GM12878 (cell line): ENCODE measurements at regions of chr6 and their contacts with region 1.

Region 1: GRCh38 chr6:56693246-56693607 is 50.5 kb upstream of the DST start:
- DNase-seq: no peak
- ATAC-seq: no peak
- H3K4me3 ChIP-seq: no peak overlapping the region
- H3K27ac ChIP-seq: no peak overlapping the region
- H3K4me1 ChIP-seq: peaks cover 12% of the 10 kb centered on the region
- H3K27me3 ChIP-seq: no peaks in the 10 kb centered on the region
- CTCF ChIP-seq: no peak
- EP300 ChIP-seq: no peak
- POLR2A ChIP-seq: no peak
- RAD21 ChIP-seq: no peak

Region 2: DNA sequence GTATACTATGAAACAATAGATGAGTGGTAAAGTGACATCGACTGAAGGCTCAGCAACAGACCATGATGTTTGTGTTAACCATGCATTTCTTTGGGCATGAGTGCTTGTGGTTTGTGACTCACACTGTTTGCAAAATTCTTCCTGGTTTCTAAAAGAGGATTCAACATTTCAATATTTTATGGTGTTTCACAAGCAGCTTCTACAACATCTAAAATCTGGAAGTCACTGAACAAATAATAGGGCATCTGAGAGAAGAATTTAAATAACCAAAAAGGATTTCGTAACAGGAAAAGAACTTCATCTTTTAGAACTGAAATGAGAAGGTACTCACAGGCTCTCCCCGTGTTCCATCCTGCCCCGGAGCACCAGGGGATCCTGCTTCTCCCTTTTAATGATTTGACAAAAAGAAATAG is 592.1 kb before region 1 on chr6:
- CTCF ChIA-PET with region 1: no interaction called
- POLR2A ChIA-PET with region 1: no interaction called
- RAD21 ChIA-PET with region 1: no interaction called
- SMC1A ChIA-PET with region 1: no interaction called
- in situ Hi-C with region 1: no loop called
- intact Hi-C with region 1: no loop called
- DNase-seq: no peak
- ATAC-seq: 0 out of 3 replicates have a peak, but pooled peaks have one; percentile 23
- H3K4me3 ChIP-seq: no peak overlapping the region
- H3K27ac ChIP-seq: no peak overlapping the region
- H3K4me1 ChIP-seq: no peaks in the 10 kb centered on the region
- H3K27me3 ChIP-seq: no peaks in the 10 kb centered on the region
- CTCF ChIP-seq: no peak
- EP300 ChIP-seq: no peak
- POLR2A ChIP-seq: no peak
- RAD21 ChIP-seq: no peak

Region 3: GRCh38 chr6:56671651-56672461 is 21.4 kb before region 1 on chr6:
- CTCF ChIA-PET with region 1: interaction called, 30 read pairs
- POLR2A ChIA-PET with region 1: interaction called, 7 read pairs
- RAD21 ChIA-PET with region 1: no interaction called
- SMC1A ChIA-PET with region 1: interaction called, 13 read pairs
- in situ Hi-C with region 1: no loop called
- intact Hi-C with region 1: no loop called
- DNase-seq: no peak
- ATAC-seq: peak; percentile 47
- H3K4me3 ChIP-seq: no peak overlapping the region
- H3K27ac ChIP-seq: peak overlapping the region; percentile 6
- H3K4me1 ChIP-seq: no peaks in the 10 kb centered on the region; the same call in 1 of the 2 replicates
- H3K27me3 ChIP-seq: no peaks in the 10 kb centered on the region
- CTCF ChIP-seq: no peak
- EP300 ChIP-seq: no peak
- POLR2A ChIP-seq: no peak
- RAD21 ChIP-seq: no peak

Region 4: DNA sequence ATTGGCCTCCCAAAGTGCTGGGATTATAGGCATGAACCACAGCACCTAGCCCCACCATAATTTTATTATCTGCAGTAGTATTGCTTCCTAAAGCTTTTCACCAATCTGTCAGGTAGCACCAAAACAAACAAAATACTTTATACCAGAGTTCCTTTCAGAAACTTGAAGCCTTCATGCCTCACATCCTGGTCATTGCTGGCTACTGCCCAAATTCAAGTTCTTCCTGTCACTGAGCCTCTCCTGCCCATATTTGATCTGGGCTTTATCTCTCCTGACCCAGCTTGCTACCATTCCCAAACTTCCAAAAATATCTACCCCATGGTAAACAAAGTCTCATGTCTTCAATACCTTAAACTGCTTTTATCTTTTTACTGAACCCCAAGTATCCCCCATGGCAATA is 15.7 kb before region 1 on chr6:
- CTCF ChIA-PET with region 1: interaction called, 30 read pairs
- POLR2A ChIA-PET with region 1: interaction called, 7 read pairs
- RAD21 ChIA-PET with region 1: no interaction called
- SMC1A ChIA-PET with region 1: interaction called, 29 read pairs
- in situ Hi-C with region 1: no loop called
- intact Hi-C with region 1: no loop called
- DNase-seq: no peak
- ATAC-seq: no peak
- H3K4me3 ChIP-seq: no peak overlapping the region
- H3K27ac ChIP-seq: peak overlapping the region; percentile 2; the same call in 1 of the 2 replicates
- H3K4me1 ChIP-seq: peaks cover 9% of the 10 kb centered on the region
- H3K27me3 ChIP-seq: no peaks in the 10 kb centered on the region
- CTCF ChIP-seq: no peak
- EP300 ChIP-seq: no peak
- POLR2A ChIP-seq: no peak
- RAD21 ChIP-seq: no peak

Region 5: GRCh38 chr6:56682635-56683034 is 10.6 kb before region 1 on chr6:
- CTCF ChIA-PET with region 1: interaction called, 32 read pairs
- POLR2A ChIA-PET with region 1: interaction called, 7 read pairs
- RAD21 ChIA-PET with region 1: no interaction called
- SMC1A ChIA-PET with region 1: interaction called, 29 read pairs
- in situ Hi-C with region 1: no loop called
- intact Hi-C with region 1: no loop called
- DNase-seq: no peak
- ATAC-seq: no peak
- H3K4me3 ChIP-seq: no peak overlapping the region
- H3K27ac ChIP-seq: no peak overlapping the region
- H3K4me1 ChIP-seq: peaks cover 4% of the 10 kb centered on the region; the same call in 1 of the 2 replicates
- H3K27me3 ChIP-seq: no peaks in the 10 kb centered on the region
- CTCF ChIP-seq: no peak
- EP300 ChIP-seq: no peak
- POLR2A ChIP-seq: no peak
- RAD21 ChIP-seq: no peak

Region 6: GRCh38 chr6:57006131-57006737 is 313.0 kb after region 1 on chr6:
- CTCF ChIA-PET with region 1: no interaction called
- POLR2A ChIA-PET with region 1: no interaction called
- RAD21 ChIA-PET with region 1: no interaction called
- SMC1A ChIA-PET with region 1: no interaction called
- in situ Hi-C with region 1: no loop called
- intact Hi-C with region 1: no loop called
- DNase-seq: no peak
- ATAC-seq: no peak
- H3K4me3 ChIP-seq: no peak overlapping the region
- H3K27ac ChIP-seq: no peak overlapping the region
- H3K4me1 ChIP-seq: no peaks in the 10 kb centered on the region
- H3K27me3 ChIP-seq: no peaks in the 10 kb centered on the region
- CTCF ChIP-seq: no peak
- EP300 ChIP-seq: no peak
- POLR2A ChIP-seq: no peak
- RAD21 ChIP-seq: no peak